CD8-positive, alpha-beta T cell (primary cell): ENCODE measurements at regions of chr17 and their contacts with region 1.

Region 1: GRCh38 chr17:16589097-16589969 is 20.3 kb upstream of the ZNF287 start:
- DNase-seq: peak; percentile 81 to 96 (median 92)
- ATAC-seq: peak; percentile 94
- H3K4me3 ChIP-seq: peak overlapping the region; percentile 62 to 65
- H3K4me3 Mint-ChIP-seq: peak overlapping the region; percentile 79
- H3K27ac ChIP-seq: no peak overlapping the region
- H3K27ac Mint-ChIP-seq: no peak overlapping the region
- H3K4me1 ChIP-seq: peaks cover 12% of the 10 kb centered on the region
- H3K4me1 Mint-ChIP-seq: peaks cover 16% of the 10 kb centered on the region
- H3K27me3 ChIP-seq: no peaks in the 10 kb centered on the region
- H3K27me3 Mint-ChIP-seq: peaks cover 33% of the 10 kb centered on the region
- CTCF ChIP-seq: peak; percentile 95

Region 2: GRCh38 chr17:16380640-16381495 is 208.5 kb before region 1 on chr17 and contains the start of gene UBB:
- CTCF ChIA-PET with region 1: interaction called, 5 read pairs
- POLR2A ChIA-PET with region 1: interaction called, 3 read pairs
- intact Hi-C with region 1: loop called in 1 of 2 experiments (anchors 10 kb)
- DNase-seq: peak; percentile 88 to 99 (median 94)
- ATAC-seq: peak; percentile 91
- H3K4me3 ChIP-seq: peak within 1 kb of the TSS; percentile 77 to 79
- H3K4me3 Mint-ChIP-seq: peak within 1 kb of the TSS; percentile 85
- H3K27ac ChIP-seq: peak within 1 kb of the TSS; percentile 89 to 99
- H3K27ac Mint-ChIP-seq: peak within 1 kb of the TSS; percentile 96
- H3K4me1 ChIP-seq: peaks cover 29% of the 10 kb centered on the region
- H3K4me1 Mint-ChIP-seq: peaks cover 36% of the 10 kb centered on the region
- H3K27me3 ChIP-seq: no peaks in the 10 kb centered on the region
- H3K27me3 Mint-ChIP-seq: no peaks in the 10 kb centered on the region
- CTCF ChIP-seq: no peak
- total RNA-seq, gene UBB: 829 to 863 TPM

Region 3: GRCh38 chr17:16439303-16439791 is 150.0 kb before region 1 on chr17:
- CTCF ChIA-PET with region 1: no interaction called
- POLR2A ChIA-PET with region 1: no interaction called
- intact Hi-C with region 1: no loop called
- DNase-seq: peak in 7 of 9 experiments; percentile 7 to 76 (median 35)
- ATAC-seq: peak; percentile 3
- H3K4me3 ChIP-seq: peak overlapping the region; percentile 88 to 91
- H3K4me3 Mint-ChIP-seq: peak overlapping the region; percentile 99
- H3K27ac ChIP-seq: peak overlapping the region; percentile 88 to 90
- H3K27ac Mint-ChIP-seq: peak overlapping the region; percentile 99
- H3K4me1 ChIP-seq: peaks cover 34% of the 10 kb centered on the region
- H3K4me1 Mint-ChIP-seq: peaks cover 49% of the 10 kb centered on the region
- H3K27me3 ChIP-seq: no peaks in the 10 kb centered on the region
- H3K27me3 Mint-ChIP-seq: no peaks in the 10 kb centered on the region
- CTCF ChIP-seq: no peak

Region 4: DNA sequence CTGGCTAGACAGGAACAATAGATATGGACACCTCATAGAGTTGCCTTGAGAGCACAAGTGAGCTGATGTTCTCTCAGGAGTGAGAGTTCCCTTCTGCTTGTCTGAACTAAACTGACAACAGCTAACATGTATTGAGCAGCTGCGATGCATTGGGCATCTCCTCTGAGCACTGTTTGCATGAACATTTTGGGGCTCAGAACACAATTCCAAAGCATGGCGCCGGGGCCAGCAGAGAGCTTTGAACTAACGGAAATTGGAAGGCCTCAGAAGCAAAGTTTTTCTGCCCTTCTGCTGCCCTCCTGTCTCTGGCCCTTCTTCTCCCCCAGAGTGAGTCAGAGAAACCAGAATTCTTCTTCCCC is 135.9 kb before region 1 on chr17:
- CTCF ChIA-PET with region 1: interaction called, 6 read pairs
- POLR2A ChIA-PET with region 1: no interaction called
- intact Hi-C with region 1: loop called (anchors 1 kb)
- DNase-seq: no peak
- ATAC-seq: no peak
- H3K4me3 ChIP-seq: no peak overlapping the region
- H3K4me3 Mint-ChIP-seq: no peak overlapping the region
- H3K27ac ChIP-seq: no peak overlapping the region
- H3K27ac Mint-ChIP-seq: peak overlapping the region; percentile 55
- H3K4me1 ChIP-seq: no peaks in the 10 kb centered on the region
- H3K4me1 Mint-ChIP-seq: peaks cover 11% of the 10 kb centered on the region
- H3K27me3 ChIP-seq: no peaks in the 10 kb centered on the region
- H3K27me3 Mint-ChIP-seq: no peaks in the 10 kb centered on the region
- CTCF ChIP-seq: no peak

Region 5: DNA sequence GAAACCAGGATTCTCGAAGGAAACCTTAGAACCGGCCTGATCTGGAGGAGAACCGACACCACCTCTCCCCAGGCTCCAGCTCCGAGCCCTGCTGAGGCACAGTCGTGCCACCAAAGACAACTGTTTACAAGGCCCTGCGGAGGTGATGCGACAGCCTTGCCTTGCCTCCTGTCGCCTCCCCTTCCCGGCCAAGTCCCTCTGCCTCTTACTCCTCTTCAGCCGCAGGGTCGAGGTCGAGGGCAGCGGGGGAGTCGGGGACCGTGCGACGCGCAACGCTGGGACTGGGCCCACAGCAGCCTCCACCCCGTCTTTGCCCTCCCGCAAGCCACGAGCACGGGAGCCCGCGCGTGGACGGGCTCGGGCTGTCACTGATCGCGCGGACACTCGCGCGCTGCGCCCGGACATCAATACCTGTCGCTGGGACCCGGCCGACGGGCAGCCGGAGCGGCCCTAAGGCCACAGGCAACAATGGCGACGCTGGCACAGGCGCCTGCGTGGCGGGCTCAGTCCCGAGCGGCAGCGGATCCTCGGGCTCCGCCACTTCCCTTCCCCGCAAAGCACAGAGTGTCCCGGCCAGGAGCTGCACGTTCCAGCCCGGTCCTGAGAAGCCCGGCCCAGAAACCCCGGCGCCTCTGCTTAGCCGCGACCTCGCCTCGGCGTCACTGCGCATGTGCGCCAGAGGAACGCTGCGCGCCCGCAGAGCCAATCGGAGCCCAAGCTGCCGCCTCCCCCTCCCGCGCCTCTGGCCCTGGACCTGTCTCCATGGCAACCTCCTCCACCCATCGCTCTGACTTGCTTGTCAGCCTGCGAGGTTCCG is 20.6 kb before region 1 on chr17 and contains the start of gene ZNF287:
- CTCF ChIA-PET with region 1: interaction called, 44 read pairs
- POLR2A ChIA-PET with region 1: interaction called, 4 read pairs
- intact Hi-C with region 1: loop called (anchors 1 kb)
- DNase-seq: peak; percentile 84 to 97 (median 94)
- ATAC-seq: peak; percentile 96
- H3K4me3 ChIP-seq: peak within 1 kb of the TSS; percentile 63 to 68
- H3K4me3 Mint-ChIP-seq: peak within 1 kb of the TSS; percentile 83
- H3K27ac ChIP-seq: peak within 1 kb of the TSS; percentile 59 to 61
- H3K27ac Mint-ChIP-seq: peak within 1 kb of the TSS; percentile 89
- H3K4me1 ChIP-seq: peaks cover 9% of the 10 kb centered on the region
- H3K4me1 Mint-ChIP-seq: peaks cover 28% of the 10 kb centered on the region
- H3K27me3 ChIP-seq: no peaks in the 10 kb centered on the region
- H3K27me3 Mint-ChIP-seq: peaks cover 8% of the 10 kb centered on the region
- CTCF ChIP-seq: no peak
- total RNA-seq, gene ZNF287: 13.7 to 13.8 TPM

Region 6: GRCh38 chr17:16623282-16623681 is 33.9 kb after region 1 on chr17:
- CTCF ChIA-PET with region 1: no interaction called
- POLR2A ChIA-PET with region 1: no interaction called
- intact Hi-C with region 1: no loop called
- DNase-seq: no peak
- ATAC-seq: no peak
- H3K4me3 ChIP-seq: no peak overlapping the region
- H3K4me3 Mint-ChIP-seq: no peak overlapping the region
- H3K27ac ChIP-seq: no peak overlapping the region
- H3K27ac Mint-ChIP-seq: no peak overlapping the region
- H3K4me1 ChIP-seq: no peaks in the 10 kb centered on the region
- H3K4me1 Mint-ChIP-seq: no peaks in the 10 kb centered on the region
- H3K27me3 ChIP-seq: no peaks in the 10 kb centered on the region
- H3K27me3 Mint-ChIP-seq: no peaks in the 10 kb centered on the region
- CTCF ChIP-seq: no peak

Region 7: GRCh38 chr17:16653209-16654041 is 64.1 kb after region 1 on chr17 and contains the start of gene ZNF624:
- CTCF ChIA-PET with region 1: interaction called, 3 read pairs
- POLR2A ChIA-PET with region 1: no interaction called
- intact Hi-C with region 1: loop called (anchors 1 to 5 kb)
- DNase-seq: peak; percentile 68 to 93 (median 85)
- ATAC-seq: peak; percentile 95
- H3K4me3 ChIP-seq: peak within 1 kb of the TSS; percentile 76 to 94
- H3K4me3 Mint-ChIP-seq: peak within 1 kb of the TSS; percentile 83
- H3K27ac ChIP-seq: peak within 1 kb of the TSS; percentile 22 to 62
- H3K27ac Mint-ChIP-seq: peak within 1 kb of the TSS; percentile 79
- H3K4me1 ChIP-seq: peaks cover 13% of the 10 kb centered on the region
- H3K4me1 Mint-ChIP-seq: peaks cover 24% of the 10 kb centered on the region
- H3K27me3 ChIP-seq: no peaks in the 10 kb centered on the region
- H3K27me3 Mint-ChIP-seq: peaks cover 11% of the 10 kb centered on the region
- CTCF ChIP-seq: no peak
- total RNA-seq, gene ZNF624: 3.2 to 3.4 TPM